ENCODE measurements at regions of chr5 and their contacts with region 1.

Region 1: DNA sequence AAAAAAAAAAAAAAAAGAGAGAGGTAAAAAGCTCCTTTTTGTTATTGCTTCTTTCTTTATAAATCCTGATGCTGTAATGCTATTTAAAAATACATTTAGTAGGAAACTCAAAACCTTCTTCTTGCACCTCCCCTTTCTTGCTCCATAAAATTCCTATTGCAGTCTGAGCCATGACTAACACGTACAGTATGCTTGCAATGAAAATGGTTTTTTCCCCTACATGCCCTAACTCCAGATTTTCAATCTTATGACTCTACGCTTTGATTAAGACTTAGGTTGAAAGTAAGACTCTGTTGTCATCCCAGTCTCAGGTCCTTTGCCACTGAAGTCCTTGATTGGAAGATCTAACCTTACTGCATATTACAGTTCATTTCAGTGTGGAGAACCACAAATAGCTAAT is 23.9 kb downstream of the FGF10 start:
- DNase-seq: no peak
- H3K4me3 ChIP-seq: no peak overlapping the region
- H3K27ac ChIP-seq: no peak overlapping the region
- H3K4me1 ChIP-seq: no peaks in the 10 kb centered on the region
- H3K27me3 ChIP-seq: no peaks in the 10 kb centered on the region
- CTCF ChIP-seq: no peak

Region 2: GRCh38 chr5:42870882-42871418 is 1494.4 kb before region 1 on chr5:
- CTCF ChIA-PET with region 1: interaction called, 11 read pairs
- POLR2A ChIA-PET with region 1: no interaction called
- intact Hi-C with region 1: no loop called
- DNase-seq: no peak
- H3K4me3 ChIP-seq: no peak overlapping the region
- H3K27ac ChIP-seq: no peak overlapping the region
- H3K4me1 ChIP-seq: no peaks in the 10 kb centered on the region
- H3K27me3 ChIP-seq: no peaks in the 10 kb centered on the region
- CTCF ChIP-seq: no peak

Region 3: GRCh38 chr5:44426944-44427343 is 61.6 kb after region 1 on chr5:
- CTCF ChIA-PET with region 1: no interaction called
- POLR2A ChIA-PET with region 1: no interaction called
- intact Hi-C with region 1: no loop called
- DNase-seq: no peak
- H3K4me3 ChIP-seq: no peak overlapping the region
- H3K27ac ChIP-seq: no peak overlapping the region
- H3K4me1 ChIP-seq: no peaks in the 10 kb centered on the region
- H3K27me3 ChIP-seq: no peaks in the 10 kb centered on the region
- CTCF ChIP-seq: no peak

Measured in A673 (cell line).